GM12878 (cell line): ENCODE measurements at regions of chr5 and their contacts with region 1.

Region 1: DNA sequence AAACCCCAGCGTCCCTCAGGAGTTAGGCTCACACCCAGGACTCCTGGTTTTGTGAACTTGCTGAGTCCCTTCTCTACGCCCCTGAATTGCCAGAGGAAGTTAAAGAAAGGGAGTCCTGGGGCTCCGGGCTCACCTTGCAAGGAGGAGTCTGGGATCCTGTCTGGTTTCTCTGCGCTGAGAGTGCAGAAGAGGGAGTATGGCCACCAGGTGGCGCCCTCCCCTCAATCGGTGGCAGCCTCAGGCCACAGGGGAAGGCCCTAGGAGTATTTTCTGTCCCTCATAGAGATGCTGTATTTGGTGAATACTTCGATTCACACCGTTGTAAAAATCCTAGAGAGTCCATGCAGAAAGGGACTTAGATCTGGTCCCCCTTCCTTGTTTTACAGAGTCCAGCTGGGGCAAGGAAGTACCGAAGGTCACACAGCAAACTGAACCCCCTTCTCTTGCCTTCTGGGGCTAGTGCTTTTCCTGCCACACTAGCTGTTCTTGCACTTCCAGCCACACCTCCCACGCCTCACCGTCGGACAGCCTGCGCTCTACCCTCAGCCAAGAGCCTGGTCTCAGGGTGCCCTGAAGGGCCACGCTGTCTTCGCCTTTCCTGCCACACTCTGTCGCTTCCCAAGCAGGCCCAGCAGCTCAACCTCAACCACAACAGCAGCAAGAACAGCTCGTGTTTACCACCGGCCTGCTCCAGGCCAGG is 10.2 kb downstream of the HAND1 start:
- DNase-seq: peak; percentile 42
- ATAC-seq: peak; percentile 99
- H3K4me3 ChIP-seq: no peak overlapping the region
- H3K27ac ChIP-seq: no peak overlapping the region
- H3K4me1 ChIP-seq: peaks cover 12% of the 10 kb centered on the region
- H3K27me3 ChIP-seq: peaks cover 0 to 3% of the 10 kb centered on the region in 2 experiments; a peak in 1 of 4 replicates
- CTCF ChIP-seq: peak; percentile 89 to 96 (median 92)
- EP300 ChIP-seq: no peak
- POLR2A ChIP-seq: no peak
- RAD21 ChIP-seq: peak; percentile 98

Region 2: GRCh38 chr5:154072414-154073171 is 395.2 kb before region 1 on chr5:
- CTCF ChIA-PET with region 1: interaction called, 33 read pairs
- POLR2A ChIA-PET with region 1: no interaction called
- RAD21 ChIA-PET with region 1: interaction called, 14 read pairs
- SMC1A ChIA-PET with region 1: interaction called, 7 read pairs
- in situ Hi-C with region 1: no loop called
- intact Hi-C with region 1: loop called (anchors 1 kb)
- DNase-seq: peak; percentile 43
- ATAC-seq: peak; percentile 99
- H3K4me3 ChIP-seq: no peak overlapping the region
- H3K27ac ChIP-seq: no peak overlapping the region
- H3K4me1 ChIP-seq: no peaks in the 10 kb centered on the region
- H3K27me3 ChIP-seq: no peaks in the 10 kb centered on the region
- CTCF ChIP-seq: peak; percentile 85 to 98 (median 93)
- EP300 ChIP-seq: no peak
- POLR2A ChIP-seq: no peak
- RAD21 ChIP-seq: peak; percentile 96

Region 3: GRCh38 chr5:154138701-154139100 is 329.1 kb before region 1 on chr5:
- CTCF ChIA-PET with region 1: no interaction called
- POLR2A ChIA-PET with region 1: no interaction called
- RAD21 ChIA-PET with region 1: no interaction called
- SMC1A ChIA-PET with region 1: no interaction called
- in situ Hi-C with region 1: no loop called
- intact Hi-C with region 1: no loop called
- DNase-seq: no peak
- ATAC-seq: no peak
- H3K4me3 ChIP-seq: no peak overlapping the region
- H3K27ac ChIP-seq: no peak overlapping the region
- H3K4me1 ChIP-seq: no peaks in the 10 kb centered on the region
- H3K27me3 ChIP-seq: no peaks in the 10 kb centered on the region
- CTCF ChIP-seq: no peak
- EP300 ChIP-seq: no peak
- POLR2A ChIP-seq: no peak
- RAD21 ChIP-seq: no peak

Region 4: DNA sequence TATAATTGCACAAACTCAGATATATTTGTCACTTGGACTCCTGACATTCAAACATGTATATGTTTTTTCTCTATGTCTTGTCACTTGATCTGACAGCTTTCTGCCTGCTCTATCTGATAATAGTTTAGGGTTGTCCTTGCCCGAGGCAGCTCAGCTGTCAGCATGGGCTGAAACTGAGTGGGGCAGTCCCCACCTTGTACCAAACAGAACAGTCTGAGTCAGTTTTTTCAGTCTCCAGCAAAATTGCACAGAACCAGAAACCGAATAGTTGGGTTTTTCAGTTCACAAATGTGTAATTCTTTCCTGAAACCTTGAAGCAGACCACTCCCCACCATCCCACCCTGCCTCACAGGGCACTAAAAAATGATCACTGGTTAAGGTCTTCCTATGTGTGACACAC is 19.7 kb after region 1 on chr5:
- CTCF ChIA-PET with region 1: interaction called, 6 read pairs
- POLR2A ChIA-PET with region 1: no interaction called
- RAD21 ChIA-PET with region 1: interaction called, 10 read pairs
- SMC1A ChIA-PET with region 1: interaction called, 6 read pairs
- in situ Hi-C with region 1: no loop called
- intact Hi-C with region 1: no loop called
- DNase-seq: peak; percentile 60
- ATAC-seq: peak; percentile 99
- H3K4me3 ChIP-seq: no peak overlapping the region
- H3K27ac ChIP-seq: no peak overlapping the region
- H3K4me1 ChIP-seq: peaks cover 22% of the 10 kb centered on the region
- H3K27me3 ChIP-seq: peaks cover 12 to 20% of the 10 kb centered on the region in 2 experiments
- CTCF ChIP-seq: no peak
- EP300 ChIP-seq: peak in 1 of 2 experiments; percentile 78; a peak in 1 of 4 replicates
- POLR2A ChIP-seq: no peak
- RAD21 ChIP-seq: no peak

Region 5: DNA sequence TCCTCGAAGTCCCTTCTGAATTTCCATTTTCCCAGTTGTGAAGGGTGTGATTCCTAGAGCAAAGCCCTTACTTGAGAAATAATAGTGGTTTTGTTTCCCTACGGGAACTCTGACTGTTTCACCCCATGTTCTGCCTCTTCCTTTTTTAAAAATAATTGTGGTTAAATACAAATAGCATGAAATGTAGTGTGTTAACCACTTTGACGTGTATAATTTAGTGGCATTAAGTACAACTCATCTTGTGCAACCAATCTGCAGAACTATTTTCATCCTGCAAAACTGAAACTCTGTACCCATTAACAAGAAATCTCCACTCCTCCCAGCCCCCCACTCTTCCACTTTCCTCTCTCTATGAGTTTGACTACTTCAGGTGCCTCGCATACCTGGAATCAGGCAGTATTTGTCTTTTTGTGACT is 45.9 kb after region 1 on chr5:
- CTCF ChIA-PET with region 1: interaction called, 10 read pairs
- POLR2A ChIA-PET with region 1: no interaction called
- RAD21 ChIA-PET with region 1: interaction called, 9 read pairs
- SMC1A ChIA-PET with region 1: interaction called, 29 read pairs
- in situ Hi-C with region 1: no loop called
- intact Hi-C with region 1: no loop called
- DNase-seq: peak; percentile 61
- ATAC-seq: peak; percentile 77
- H3K4me3 ChIP-seq: peak overlapping the region; percentile 34; the same call in 1 of the 2 replicates
- H3K27ac ChIP-seq: peak overlapping the region; percentile 39
- H3K4me1 ChIP-seq: peaks cover 48% of the 10 kb centered on the region
- H3K27me3 ChIP-seq: no peaks in the 10 kb centered on the region
- CTCF ChIP-seq: no peak
- EP300 ChIP-seq: peak; percentile 86; a peak in 3 of 4 replicates
- POLR2A ChIP-seq: no peak
- RAD21 ChIP-seq: no peak

Region 6: GRCh38 chr5:154575546-154576428 is 108.0 kb after region 1 on chr5:
- CTCF ChIA-PET with region 1: interaction called, 135 read pairs
- POLR2A ChIA-PET with region 1: no interaction called
- RAD21 ChIA-PET with region 1: interaction called, 81 read pairs
- SMC1A ChIA-PET with region 1: interaction called, 90 read pairs
- in situ Hi-C with region 1: no loop called
- intact Hi-C with region 1: loop called (anchors 1 kb)
- DNase-seq: peak; percentile 66
- ATAC-seq: peak; percentile 97
- H3K4me3 ChIP-seq: no peak overlapping the region
- H3K27ac ChIP-seq: no peak overlapping the region
- H3K4me1 ChIP-seq: peaks cover 16% of the 10 kb centered on the region
- H3K27me3 ChIP-seq: no peaks in the 10 kb centered on the region
- CTCF ChIP-seq: peak; percentile 60 to 67 (median 64)
- EP300 ChIP-seq: no peak
- POLR2A ChIP-seq: no peak
- RAD21 ChIP-seq: peak; percentile 74

Region 7: DNA sequence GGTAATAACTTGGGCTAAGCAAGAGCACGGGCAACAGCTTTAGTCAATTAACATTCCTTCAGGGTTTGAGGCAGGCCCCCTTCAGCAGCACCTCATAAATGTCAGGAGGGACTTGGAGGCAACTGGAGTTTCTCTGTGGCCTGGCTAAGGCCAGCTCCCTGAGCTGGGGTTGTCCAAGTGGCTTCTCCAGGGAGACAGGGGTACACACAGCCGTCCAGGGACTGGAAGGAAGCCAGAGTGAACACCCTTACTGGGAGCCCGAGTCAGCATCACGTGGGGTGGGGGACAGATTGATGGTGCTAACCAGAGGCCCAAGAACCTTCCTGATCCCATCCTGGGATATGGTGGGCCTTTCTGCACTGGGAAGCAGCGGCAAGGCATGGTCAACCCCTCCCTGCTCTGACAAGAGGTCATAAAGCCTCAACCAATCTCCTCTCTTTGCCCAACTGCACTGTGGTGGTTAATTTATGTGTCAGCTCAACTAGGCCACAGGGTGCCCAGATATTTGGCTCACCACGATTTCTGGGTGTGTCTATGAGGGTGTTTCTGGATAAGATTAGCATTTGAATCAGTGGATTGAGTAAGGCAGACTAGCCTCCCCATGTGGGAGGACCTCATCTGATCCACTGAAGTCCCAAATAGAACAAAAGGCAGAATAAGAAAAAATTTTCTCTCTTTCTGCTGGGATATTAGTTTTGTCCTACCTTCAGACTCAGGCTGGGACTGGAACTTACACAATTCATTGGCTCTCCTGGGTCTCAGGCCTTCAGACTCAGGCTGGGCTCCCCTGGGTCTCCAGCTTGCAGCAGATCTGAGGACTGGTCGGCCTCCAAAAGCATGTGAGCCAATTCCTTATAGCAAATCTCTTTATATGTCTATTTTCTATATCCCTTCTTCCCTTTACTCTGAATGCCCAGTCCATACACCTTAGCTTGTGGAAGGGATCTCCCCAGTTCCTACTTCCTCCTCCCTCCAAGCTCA is 160.2 kb after region 1 on chr5:
- CTCF ChIA-PET with region 1: interaction called, 17 read pairs
- POLR2A ChIA-PET with region 1: no interaction called
- RAD21 ChIA-PET with region 1: interaction called, 6 read pairs
- SMC1A ChIA-PET with region 1: interaction called, 12 read pairs
- in situ Hi-C with region 1: no loop called
- intact Hi-C with region 1: no loop called
- DNase-seq: no peak
- ATAC-seq: no peak
- H3K4me3 ChIP-seq: no peak overlapping the region
- H3K27ac ChIP-seq: no peak overlapping the region
- H3K4me1 ChIP-seq: no peaks in the 10 kb centered on the region
- H3K27me3 ChIP-seq: no peaks in the 10 kb centered on the region; a peak in 1 of 4 replicates
- CTCF ChIP-seq: no peak
- EP300 ChIP-seq: no peak
- POLR2A ChIP-seq: no peak
- RAD21 ChIP-seq: no peak